Mammary epithelial cell (primary cell): ENCODE measurements at regions of chr7 and their contacts with region 1.

Region 1: GRCh38 chr7:19051767-19052375 is 65.6 kb downstream of the TWIST1 start:
- DNase-seq: peak; percentile 8
- H3K4me3 ChIP-seq: no peak overlapping the region
- H3K27ac ChIP-seq: no peak overlapping the region
- H3K4me1 ChIP-seq: no peaks in the 10 kb centered on the region
- H3K27me3 ChIP-seq: no peaks in the 10 kb centered on the region
- CTCF ChIP-seq: peak; percentile 77 to 92

Region 2: DNA sequence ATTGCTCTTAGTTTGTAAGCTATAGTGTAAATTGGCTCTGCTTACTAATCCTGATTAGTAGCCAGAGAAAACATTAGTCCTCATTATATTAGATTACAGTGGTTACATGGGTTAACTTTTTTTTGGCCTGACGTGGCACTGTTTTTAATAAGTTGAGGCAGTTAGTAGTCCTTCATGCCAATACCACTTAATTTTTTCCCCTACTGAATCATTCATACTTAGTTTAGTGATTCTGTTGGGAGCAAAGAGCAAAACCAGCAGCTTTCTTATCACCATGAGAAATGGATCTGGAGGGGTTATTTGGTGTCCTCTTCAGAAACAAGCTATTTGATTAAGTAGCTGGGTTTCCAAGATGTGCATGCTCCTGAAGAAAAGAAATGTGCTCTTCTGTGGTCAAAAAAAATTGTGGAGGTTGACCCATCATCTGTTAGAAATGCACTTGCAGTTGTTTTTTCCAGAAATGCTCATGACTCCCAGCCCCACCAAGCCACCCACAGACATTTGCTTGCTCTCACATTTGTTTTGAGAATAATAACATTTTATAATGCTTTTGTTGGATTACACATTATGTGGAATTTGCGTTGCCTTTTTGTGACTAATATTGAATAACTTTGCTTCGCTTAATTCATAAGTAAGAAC is 297.8 kb before region 1 on chr7:
- CTCF ChIA-PET with region 1: no interaction called
- dilution Hi-C with region 1: no loop called
- in situ Hi-C with region 1: no loop called
- intact Hi-C with region 1: loop called (anchors 10 kb)
- DNase-seq: peak; percentile 43
- H3K4me3 ChIP-seq: no peak overlapping the region
- H3K27ac ChIP-seq: no peak overlapping the region
- H3K4me1 ChIP-seq: no peaks in the 10 kb centered on the region
- H3K27me3 ChIP-seq: no peaks in the 10 kb centered on the region
- CTCF ChIP-seq: no peak

Region 3: GRCh38 chr7:18958627-18959026 is 93.2 kb before region 1 on chr7:
- CTCF ChIA-PET with region 1: no interaction called
- dilution Hi-C with region 1: loop called (anchors 5 kb)
- in situ Hi-C with region 1: no loop called
- intact Hi-C with region 1: no loop called
- DNase-seq: peak; percentile 25
- H3K4me3 ChIP-seq: no peak overlapping the region
- H3K27ac ChIP-seq: no peak overlapping the region
- H3K4me1 ChIP-seq: peaks cover 12% of the 10 kb centered on the region
- H3K27me3 ChIP-seq: no peaks in the 10 kb centered on the region
- CTCF ChIP-seq: no peak